ENCODE measurements at regions of chr1 and their contacts with region 1.

Region 1: DNA sequence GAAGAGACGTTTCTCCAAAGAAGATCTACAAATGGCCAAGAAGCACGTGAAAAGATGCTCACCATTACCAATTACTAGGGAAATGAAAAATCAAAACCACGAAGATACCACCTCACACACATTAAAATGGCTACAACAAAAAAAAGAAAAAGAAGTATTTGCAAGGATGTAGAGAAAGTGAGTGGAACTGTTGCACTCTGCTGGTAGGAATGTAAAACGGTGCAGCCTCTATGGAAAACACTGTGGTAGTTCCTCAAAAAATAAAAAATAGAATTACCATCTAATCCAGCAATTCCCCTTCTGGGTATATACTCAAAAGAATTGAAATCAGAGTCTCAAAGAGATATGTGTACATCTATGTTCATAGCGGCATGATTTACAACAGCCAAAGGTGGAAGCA is 115.4 kb upstream of the EDN2 start:
- DNase-seq: no peak

Region 2: DNA sequence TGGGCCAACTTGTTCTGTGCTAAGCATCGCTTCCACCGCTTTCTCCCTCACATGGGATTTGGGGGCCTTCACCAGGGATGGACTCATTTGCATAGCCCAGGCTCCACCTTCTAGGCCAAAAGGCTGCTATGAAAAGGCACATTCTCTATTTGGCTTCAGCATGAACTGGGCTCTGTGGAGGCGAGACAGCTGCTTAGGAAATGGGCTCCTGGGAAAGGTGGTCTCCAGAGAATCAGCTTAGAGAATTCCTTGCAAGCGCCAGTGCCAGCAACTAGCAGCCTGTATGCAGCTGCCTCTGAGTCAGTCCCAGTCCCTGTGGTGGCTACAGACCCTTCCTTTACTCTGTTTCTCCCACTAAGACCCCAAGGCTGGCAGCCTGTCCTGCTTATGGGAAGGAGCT is 104.3 kb after region 1 on chr1:
- in situ Hi-C with region 1: loop called (anchors 5 kb)
- DNase-seq: no peak

Measured in G401 (cell line).